ENCODE measurements at regions of chr2 and their contacts with region 1.

Region 1: GRCh38 chr2:62293490-62294271 is 97.8 kb downstream of the B3GNT2 start:
- DNase-seq: peak; percentile 60
- H3K4me3 ChIP-seq: no peak overlapping the region
- H3K27ac ChIP-seq: no peak overlapping the region
- H3K4me1 ChIP-seq: peaks cover 16% of the 10 kb centered on the region
- H3K27me3 ChIP-seq: no peaks in the 10 kb centered on the region
- CTCF ChIP-seq: no peak

Region 2: DNA sequence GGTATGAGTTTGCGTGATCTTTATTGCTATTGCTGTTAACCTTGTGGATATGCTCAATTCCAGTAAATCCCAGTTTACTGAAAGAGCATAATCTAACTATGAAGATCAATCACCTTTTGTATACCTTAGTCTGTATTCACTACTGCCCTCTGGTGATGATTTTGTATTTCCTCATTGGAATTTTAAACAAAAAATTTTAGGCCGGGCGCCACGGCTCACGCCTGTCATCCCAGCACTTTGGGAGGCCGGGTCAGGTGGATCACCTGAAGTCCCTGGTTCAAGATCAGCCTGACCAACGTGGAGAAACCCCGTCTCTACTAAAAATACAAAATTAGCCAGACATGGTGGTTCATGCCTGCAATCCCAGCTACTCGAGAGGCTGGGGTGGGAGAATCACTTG is 383.1 kb before region 1 on chr2:
- CTCF ChIA-PET with region 1: no interaction called
- dilution Hi-C with region 1: no loop called
- in situ Hi-C with region 1: no loop called
- intact Hi-C with region 1: loop called (anchors 10 kb)
- DNase-seq: no peak
- H3K4me3 ChIP-seq: no peak overlapping the region
- H3K27ac ChIP-seq: no peak overlapping the region
- H3K4me1 ChIP-seq: no peaks in the 10 kb centered on the region
- H3K27me3 ChIP-seq: no peaks in the 10 kb centered on the region
- CTCF ChIP-seq: peak; percentile 4 to 43

Region 3: DNA sequence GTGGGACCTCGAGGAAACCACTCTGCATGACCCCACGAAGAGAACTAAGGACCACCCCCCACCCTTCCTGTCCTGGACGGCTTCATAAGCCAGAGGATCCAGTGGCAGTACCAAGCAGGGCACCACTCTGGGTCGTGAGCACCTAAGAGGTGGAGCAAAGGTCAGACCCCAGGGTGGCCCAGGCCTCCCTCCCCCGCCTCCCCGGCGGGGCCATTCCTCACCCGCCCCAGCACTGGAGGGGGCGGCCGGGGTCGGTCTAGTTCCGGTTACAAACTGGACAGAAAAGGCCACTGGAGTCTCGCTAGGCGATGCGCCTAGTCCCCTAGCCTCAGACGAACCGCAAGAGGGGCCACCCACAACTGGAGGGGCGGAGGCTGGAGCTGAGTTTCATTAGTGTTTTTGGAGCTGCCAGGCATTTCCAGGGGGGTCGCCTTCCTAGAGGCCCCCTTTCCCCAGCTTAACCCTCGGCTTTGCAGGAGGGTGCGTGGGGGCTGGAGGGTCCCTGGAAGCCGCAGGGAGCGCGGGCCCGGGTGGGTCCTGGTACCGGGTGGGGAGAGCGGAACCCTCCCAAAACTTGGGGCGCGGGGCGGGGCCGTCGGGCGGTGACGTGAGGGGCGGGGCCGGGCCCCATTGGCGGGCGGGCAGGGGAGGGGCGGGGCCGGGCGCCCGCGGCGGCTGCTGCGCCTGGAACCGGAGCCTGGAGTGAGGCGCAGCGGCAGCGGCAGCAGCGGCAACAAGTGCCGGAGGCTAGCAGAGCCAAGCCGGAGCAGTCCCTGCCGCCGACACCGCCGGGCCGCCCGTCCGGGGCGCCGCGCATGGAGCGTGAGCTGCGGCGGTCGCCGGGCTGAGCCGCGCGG is 98.0 kb before region 1 on chr2 and contains the start of gene B3GNT2:
- CTCF ChIA-PET with region 1: no interaction called
- dilution Hi-C with region 1: no loop called
- in situ Hi-C with region 1: no loop called
- intact Hi-C with region 1: loop called (anchors 5 kb)
- DNase-seq: peak; percentile 66
- H3K4me3 ChIP-seq: peak within 1 kb of the TSS; percentile 73 to 95 (median 76)
- H3K27ac ChIP-seq: peak within 1 kb of the TSS; percentile 68
- H3K4me1 ChIP-seq: peaks cover 10% of the 10 kb centered on the region
- H3K27me3 ChIP-seq: no peaks in the 10 kb centered on the region
- CTCF ChIP-seq: no peak
- total RNA-seq, gene B3GNT2: 35.2 to 44.8 TPM

Region 4: GRCh38 chr2:62215316-62216064 is 78.2 kb before region 1 on chr2:
- CTCF ChIA-PET with region 1: no interaction called
- dilution Hi-C with region 1: no loop called
- in situ Hi-C with region 1: no loop called
- intact Hi-C with region 1: no loop called
- DNase-seq: no peak
- H3K4me3 ChIP-seq: no peak overlapping the region
- H3K27ac ChIP-seq: no peak overlapping the region
- H3K4me1 ChIP-seq: peaks cover 17% of the 10 kb centered on the region
- H3K27me3 ChIP-seq: no peaks in the 10 kb centered on the region
- CTCF ChIP-seq: no peak

Region 5: DNA sequence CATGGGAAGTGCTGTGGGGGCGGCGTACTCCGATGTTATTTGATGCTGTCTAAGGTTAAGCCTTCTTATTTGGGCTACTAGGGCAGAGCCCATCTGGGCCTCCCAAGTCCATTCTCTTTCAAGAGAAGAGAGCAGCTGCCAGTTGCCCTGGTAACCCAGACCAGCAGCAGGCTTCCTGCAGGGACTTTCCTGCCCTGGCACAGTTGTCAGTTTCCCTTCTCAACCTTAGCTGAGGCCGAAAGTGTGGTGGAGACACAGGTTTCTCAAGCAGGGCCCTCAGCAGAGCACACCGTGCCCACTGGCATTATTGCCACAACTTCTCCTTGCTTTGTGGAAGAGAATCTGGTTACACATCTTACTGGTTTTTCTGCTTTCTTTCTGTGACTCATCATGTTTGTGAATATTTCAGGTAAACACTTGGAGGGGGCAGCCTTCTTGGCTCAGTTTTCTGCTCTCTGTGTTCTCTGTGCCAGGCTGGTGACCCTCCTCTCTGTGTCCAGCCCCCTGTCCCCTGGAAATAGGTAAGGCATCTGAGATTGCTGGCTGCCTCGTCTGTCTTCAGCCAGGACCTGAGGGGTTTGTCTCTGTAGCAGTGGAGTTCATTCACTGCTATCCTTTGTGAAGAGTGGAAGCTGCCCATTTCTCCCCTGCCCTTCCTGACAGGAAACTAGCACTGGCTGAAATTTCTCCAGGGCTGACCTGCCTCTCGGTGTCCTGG is 13.2 kb after region 1 on chr2:
- CTCF ChIA-PET with region 1: no interaction called
- dilution Hi-C with region 1: no loop called
- in situ Hi-C with region 1: no loop called
- intact Hi-C with region 1: no loop called
- DNase-seq: peak; percentile 90
- H3K4me3 ChIP-seq: no peak overlapping the region
- H3K27ac ChIP-seq: no peak overlapping the region
- H3K4me1 ChIP-seq: peaks cover 15% of the 10 kb centered on the region
- H3K27me3 ChIP-seq: no peaks in the 10 kb centered on the region
- CTCF ChIP-seq: no peak

Region 6: GRCh38 chr2:62325398-62325797 is 31.7 kb after region 1 on chr2:
- CTCF ChIA-PET with region 1: no interaction called
- dilution Hi-C with region 1: no loop called
- in situ Hi-C with region 1: no loop called
- intact Hi-C with region 1: no loop called
- DNase-seq: no peak
- H3K4me3 ChIP-seq: no peak overlapping the region
- H3K27ac ChIP-seq: no peak overlapping the region
- H3K4me1 ChIP-seq: no peaks in the 10 kb centered on the region
- H3K27me3 ChIP-seq: no peaks in the 10 kb centered on the region
- CTCF ChIP-seq: no peak

Region 7: GRCh38 chr2:62406573-62407043 is 112.9 kb after region 1 on chr2:
- CTCF ChIA-PET with region 1: no interaction called
- dilution Hi-C with region 1: no loop called
- in situ Hi-C with region 1: no loop called
- intact Hi-C with region 1: no loop called
- DNase-seq: peak; percentile 6
- H3K4me3 ChIP-seq: no peak overlapping the region
- H3K27ac ChIP-seq: no peak overlapping the region
- H3K4me1 ChIP-seq: peaks cover 13% of the 10 kb centered on the region
- H3K27me3 ChIP-seq: no peaks in the 10 kb centered on the region
- CTCF ChIP-seq: no peak

Measured in mammary epithelial cell (primary cell).